ENCODE measurements at regions of chr2 and their contacts with region 1.

Region 1: GRCh38 chr2:112254466-112255239 is at the start of gene ZC3H8:
- DNase-seq: peak; percentile 97
- H3K4me3 Mint-ChIP-seq: peak within 1 kb of the TSS; percentile 79
- H3K27ac Mint-ChIP-seq: peak within 1 kb of the TSS; percentile 88
- H3K4me1 Mint-ChIP-seq: peaks cover 35% of the 10 kb centered on the region
- H3K27me3 Mint-ChIP-seq: no peaks in the 10 kb centered on the region
- total RNA-seq, gene ZC3H8: 12.3 to 12.9 TPM

Region 2: GRCh38 chr2:112147382-112148168 is 107.1 kb before region 1 on chr2:
- CTCF ChIA-PET with region 1: no interaction called
- POLR2A ChIA-PET with region 1: no interaction called
- DNase-seq: peak; percentile 3
- H3K4me3 Mint-ChIP-seq: no peak overlapping the region
- H3K27ac Mint-ChIP-seq: no peak overlapping the region
- H3K4me1 Mint-ChIP-seq: no peaks in the 10 kb centered on the region
- H3K27me3 Mint-ChIP-seq: peaks cover 11% of the 10 kb centered on the region

Region 3: DNA sequence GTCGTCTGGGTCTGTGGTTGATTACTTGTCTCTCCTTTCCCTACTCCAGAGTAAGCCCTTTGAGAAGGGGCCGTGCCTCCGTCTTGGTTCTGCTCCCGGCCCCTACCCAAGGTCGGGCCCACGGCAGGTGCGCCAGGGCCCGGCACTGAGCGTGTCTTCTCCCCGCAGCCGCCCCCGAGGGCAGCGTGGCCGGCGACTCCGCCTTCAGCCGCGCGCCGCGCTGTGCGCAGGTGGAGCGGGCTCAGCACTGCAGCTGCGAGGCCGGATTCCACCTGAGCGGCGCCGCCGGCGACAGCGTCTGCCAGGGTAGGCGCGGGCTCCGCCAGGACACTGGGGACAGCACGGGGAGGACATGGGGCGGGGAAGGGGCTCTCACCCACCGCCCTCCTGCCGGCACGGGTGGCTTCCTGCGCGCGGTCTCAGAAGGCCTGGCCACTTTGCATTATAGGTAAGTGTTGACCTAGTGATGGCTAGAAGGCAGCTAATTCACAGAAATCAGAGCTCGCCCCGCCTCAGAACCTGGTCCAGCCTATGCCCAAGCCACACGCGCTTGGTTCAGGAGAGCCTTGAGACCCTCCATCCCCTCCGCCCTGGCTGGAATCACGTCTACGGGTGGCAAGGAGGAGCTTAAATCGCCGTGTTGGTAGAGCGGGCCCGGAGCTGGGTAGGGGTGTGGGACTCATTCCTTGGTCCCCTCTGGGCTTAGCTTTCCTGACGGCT is 72.9 kb before region 1 on chr2:
- CTCF ChIA-PET with region 1: interaction called, 5 read pairs
- POLR2A ChIA-PET with region 1: interaction called, 24 read pairs
- DNase-seq: peak; percentile 58
- H3K4me3 Mint-ChIP-seq: peak overlapping the region; percentile 71
- H3K27ac Mint-ChIP-seq: peak overlapping the region; percentile 77
- H3K4me1 Mint-ChIP-seq: peaks cover 40% of the 10 kb centered on the region
- H3K27me3 Mint-ChIP-seq: peaks cover 1% of the 10 kb centered on the region

Region 4: GRCh38 chr2:112187805-112188596 is 66.7 kb before region 1 on chr2:
- CTCF ChIA-PET with region 1: interaction called, 5 read pairs
- POLR2A ChIA-PET with region 1: interaction called, 24 read pairs
- DNase-seq: peak; percentile 77
- H3K4me3 Mint-ChIP-seq: peak overlapping the region; percentile 18
- H3K27ac Mint-ChIP-seq: peak overlapping the region; percentile 94
- H3K4me1 Mint-ChIP-seq: peaks cover 54% of the 10 kb centered on the region
- H3K27me3 Mint-ChIP-seq: no peaks in the 10 kb centered on the region

Region 5: GRCh38 chr2:112275306-112275886 is 20.7 kb after region 1 on chr2 and contains the start of gene ZC3H6:
- CTCF ChIA-PET with region 1: interaction called, 10 read pairs
- POLR2A ChIA-PET with region 1: interaction called, 28 read pairs
- DNase-seq: peak; percentile 99
- H3K4me3 Mint-ChIP-seq: peak within 1 kb of the TSS; percentile 91
- H3K27ac Mint-ChIP-seq: peak within 1 kb of the TSS; percentile 95
- H3K4me1 Mint-ChIP-seq: peaks cover 10% of the 10 kb centered on the region
- H3K27me3 Mint-ChIP-seq: no peaks in the 10 kb centered on the region
- total RNA-seq, gene ZC3H6: 13.5 to 14.7 TPM

Region 6: GRCh38 chr2:112301171-112301584 is 46.5 kb after region 1 on chr2:
- CTCF ChIA-PET with region 1: no interaction called
- POLR2A ChIA-PET with region 1: no interaction called
- DNase-seq: no peak
- H3K4me3 Mint-ChIP-seq: no peak overlapping the region
- H3K27ac Mint-ChIP-seq: no peak overlapping the region
- H3K4me1 Mint-ChIP-seq: peaks cover 3% of the 10 kb centered on the region
- H3K27me3 Mint-ChIP-seq: no peaks in the 10 kb centered on the region

Measured in activated CD4-positive, alpha-beta memory T cell treated with anti-CD3 and anti-CD28 coated beads, Interleukin-2, amount 10 ng/mL, durations not matched to agents 7 days and 5 days (primary cell).